Heart right ventricle (tissue), 16 donors: ENCODE measurements at regions of chr11 and their contacts with region 1.

Region 1: DNA sequence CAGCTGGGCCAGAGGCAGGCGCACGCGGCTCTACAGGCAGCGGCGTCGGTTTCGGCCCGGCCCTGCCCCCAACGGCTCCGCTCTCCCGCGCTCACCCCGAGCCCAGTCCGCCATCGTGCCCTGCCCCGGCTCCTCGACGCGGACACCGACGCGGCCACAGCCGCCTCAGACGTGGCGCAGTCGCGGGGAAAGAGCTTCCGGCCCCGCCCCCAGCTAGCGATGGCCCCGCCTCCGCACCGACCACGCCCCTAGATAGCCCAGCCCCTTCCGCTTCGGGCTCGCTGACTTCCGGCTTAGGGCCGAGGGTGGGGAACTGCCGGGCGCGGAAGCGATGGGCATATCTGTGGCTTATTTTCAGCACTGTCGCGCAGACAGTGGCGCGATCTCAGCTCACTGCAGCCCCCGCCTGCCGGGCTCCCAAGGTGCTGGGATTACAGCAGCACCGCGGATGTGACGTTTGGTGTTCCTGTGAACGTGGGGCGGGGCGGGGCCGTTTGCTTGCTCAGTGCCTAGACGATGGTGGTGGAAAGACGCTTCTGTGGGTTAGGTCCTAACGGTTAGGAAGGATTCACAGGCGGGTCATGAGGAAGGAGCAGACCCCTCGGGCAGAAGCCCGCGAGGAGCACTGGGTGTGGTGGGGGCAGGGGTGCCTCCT is at the starts of genes BET1L and RIC8A:
- DNase-seq: peak; percentile 94 to 96
- ATAC-seq: peak; percentile 89 to 95 (median 93)
- H3K4me3 ChIP-seq: peak within 1 kb of the TSS; percentile 79 to 96 (median 90)
- H3K27ac ChIP-seq: peak within 1 kb of the TSS; percentile 96 to 100 (median 98)
- H3K4me1 ChIP-seq: peaks cover 20 to 64% (median 39%) of the 10 kb centered on the region in 9 donors
- H3K27me3 ChIP-seq: no peaks in the 10 kb centered on the region
- CTCF ChIP-seq: no peak
- total RNA-seq, gene BET1L: 18.7 to 32.0 (median 20.7) TPM
- total RNA-seq, gene RIC8A: 38.4 to 82.1 (median 59.5) TPM

Region 2: GRCh38 chr11:236774-237767 is 29.7 kb after region 1 on chr11 and contains the start of gene PSMD13:
- intact Hi-C with region 1: loop called in 3 of 10 experiments (anchors 1 to 2 kb)
- DNase-seq: peak; percentile 87
- ATAC-seq: peak; percentile 92 to 98 (median 95)
- H3K4me3 ChIP-seq: peak within 1 kb of the TSS; percentile 76 to 98 (median 90)
- H3K27ac ChIP-seq: peak within 1 kb of the TSS; percentile 86 to 98 (median 94)
- H3K4me1 ChIP-seq: peaks cover 0 to 46% (median 32%) of the 10 kb centered on the region in 9 donors
- H3K27me3 ChIP-seq: no peaks in the 10 kb centered on the region
- CTCF ChIP-seq: no peak
- total RNA-seq, gene PSMD13: 78.7 to 110 (median 90.4) TPM

Region 3: GRCh38 chr11:269146-269890 is 62.0 kb after region 1 on chr11:
- intact Hi-C with region 1: no loop called
- DNase-seq: no peak
- ATAC-seq: peak in 7 of 8 donors; percentile 32 to 63 (median 49)
- H3K4me3 ChIP-seq: peak overlapping the region in 4 of 10 donors; percentile 11 to 55 (median 36)
- H3K27ac ChIP-seq: peak overlapping the region in 8 of 10 donors; percentile 9 to 97 (median 57)
- H3K4me1 ChIP-seq: peaks cover 0 to 35% (median 0%) of the 10 kb centered on the region in 9 donors
- H3K27me3 ChIP-seq: peaks cover 0 to 32% (median 15%) of the 10 kb centered on the region in 7 donors
- CTCF ChIP-seq: no peak

Region 4: DNA sequence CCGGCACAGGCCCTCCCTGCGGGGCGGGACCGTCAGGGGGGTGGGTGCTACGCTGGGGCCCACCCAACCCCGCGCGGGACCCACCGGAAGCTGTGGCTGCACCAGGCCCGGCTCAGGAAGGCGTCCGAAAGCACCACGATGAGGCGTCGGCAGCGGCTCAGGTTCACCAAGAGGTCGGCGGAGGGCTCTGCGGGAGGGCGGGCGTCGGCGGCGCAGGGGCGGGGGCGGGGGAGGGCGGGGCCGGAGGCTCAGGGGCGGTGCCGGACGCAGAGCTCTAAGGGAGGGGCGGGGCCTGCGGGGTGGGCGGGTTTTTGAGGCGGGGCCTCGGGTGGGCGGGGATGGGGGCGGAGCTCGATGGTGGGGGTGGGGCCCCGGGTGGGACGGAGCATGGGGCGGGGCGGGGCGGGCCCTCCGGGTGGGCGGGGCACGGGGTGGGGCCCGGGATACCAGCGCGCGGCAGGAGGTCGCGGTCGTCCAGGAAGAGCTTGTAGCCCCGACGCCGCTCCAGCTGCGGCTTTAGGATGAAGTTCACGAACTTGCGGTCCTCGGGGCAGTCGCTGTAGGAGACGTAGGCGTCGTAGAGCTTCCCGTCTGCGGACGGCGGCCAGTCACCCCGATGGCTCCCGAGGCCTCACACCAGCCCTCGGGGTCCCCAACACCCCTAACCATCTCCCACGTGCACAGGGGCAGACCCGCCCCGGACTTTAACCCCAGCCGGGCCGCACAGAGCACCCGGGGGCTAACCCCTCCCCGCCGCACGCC is 199.8 kb after region 1 on chr11:
- intact Hi-C with region 1: loop called in 1 of 10 experiments (anchors 5 kb)
- DNase-seq: peak; percentile 82 to 85
- ATAC-seq: peak; percentile 72 to 83 (median 76)
- H3K4me3 ChIP-seq: peak overlapping the region; percentile 56 to 85 (median 70)
- H3K27ac ChIP-seq: peak overlapping the region; percentile 70 to 89 (median 82)
- H3K4me1 ChIP-seq: peaks cover 6 to 24% (median 18%) of the 10 kb centered on the region in 9 donors
- H3K27me3 ChIP-seq: no peaks in the 10 kb centered on the region
- CTCF ChIP-seq: peak in 2 of 9 donors; percentile 1 to 2